H1 (cell line): ENCODE measurements at regions of chr6 and their contacts with region 1.

Region 1: GRCh38 chr6:44475779-44476434 is 88.4 kb downstream of the CDC5L start:
- DNase-seq: peak; percentile 73 to 94
- H3K4me3 ChIP-seq: no peak overlapping the region
- H3K27ac ChIP-seq: peak overlapping the region; percentile 66; the same call in 1 of the 2 replicates
- H3K4me1 ChIP-seq: peaks cover under 1 to 15% (median 11%) of the 10 kb centered on the region in 4 experiments
- H3K27me3 ChIP-seq: no peaks in the 10 kb centered on the region
- CTCF ChIP-seq: peak in 2 of 3 experiments; percentile 92 to 98; a peak in 3 of 4 replicates
- EP300 ChIP-seq: peak in 1 of 2 experiments; percentile 62; a peak in 1 of 3 replicates
- POLR2A ChIP-seq: peak in 1 of 2 experiments; percentile 25; a peak in 2 of 3 replicates
- RAD21 ChIP-seq: peak; percentile 99 to 100

Region 2: DNA sequence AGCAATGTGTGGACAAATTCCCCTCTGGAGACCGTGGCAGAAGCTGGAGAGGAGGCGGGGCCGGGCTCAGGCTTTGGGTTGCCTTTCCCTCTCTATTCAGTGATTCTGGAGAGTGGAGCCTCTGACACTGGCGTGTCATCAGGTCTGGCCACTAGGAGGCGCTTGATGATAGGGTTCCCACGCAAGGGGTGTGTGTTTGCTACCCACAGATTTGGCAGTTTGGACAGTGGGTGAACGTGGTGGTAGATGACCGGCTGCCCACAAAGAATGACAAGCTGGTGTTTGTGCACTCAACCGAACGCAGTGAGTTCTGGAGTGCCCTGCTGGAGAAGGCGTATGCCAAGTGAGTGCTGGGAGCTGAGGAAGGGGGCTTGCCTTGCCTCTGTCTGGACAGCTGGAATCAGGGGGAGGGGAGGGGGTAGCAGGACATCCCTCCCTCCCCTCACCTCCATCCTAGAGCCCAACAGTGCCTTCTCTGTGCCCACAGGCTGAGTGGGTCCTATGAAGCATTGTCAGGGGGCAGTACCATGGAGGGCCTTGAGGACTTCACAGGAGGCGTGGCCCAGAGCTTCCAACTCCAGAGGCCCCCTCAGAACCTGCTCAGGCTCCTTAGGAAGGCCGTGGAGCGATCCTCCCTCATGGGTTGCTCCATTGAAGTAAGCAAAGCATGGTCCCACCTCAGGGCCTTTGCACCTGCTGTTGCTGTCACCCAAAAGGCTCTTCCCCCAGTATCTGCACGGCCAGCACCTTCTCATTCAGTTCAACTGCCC is 303.0 kb before region 1 on chr6:
- CTCF ChIA-PET with region 1: no interaction called
- POLR2A ChIA-PET with region 1: no interaction called
- DNase-seq: peak in 1 of 2 experiments; percentile 91
- H3K4me3 ChIP-seq: no peak overlapping the region
- H3K27ac ChIP-seq: no peak overlapping the region
- H3K4me1 ChIP-seq: peaks cover 0 to 12% (median 3%) of the 10 kb centered on the region in 4 experiments; a peak in 6 of 7 replicates
- H3K27me3 ChIP-seq: no peaks in the 10 kb centered on the region
- CTCF ChIP-seq: peak; percentile 89 to 94 (median 90)
- EP300 ChIP-seq: no peak
- POLR2A ChIP-seq: no peak
- RAD21 ChIP-seq: peak; percentile 93 to 94

Region 3: GRCh38 chr6:44456070-44456965 is 19.6 kb before region 1 on chr6:
- CTCF ChIA-PET with region 1: interaction called, 41 read pairs
- POLR2A ChIA-PET with region 1: no interaction called
- DNase-seq: no peak
- H3K4me3 ChIP-seq: no peak overlapping the region
- H3K27ac ChIP-seq: no peak overlapping the region
- H3K4me1 ChIP-seq: peaks cover 0 to 2% (median under 1%) of the 10 kb centered on the region in 4 experiments; a peak in 2 of 7 replicates
- H3K27me3 ChIP-seq: no peaks in the 10 kb centered on the region
- CTCF ChIP-seq: peak; percentile 72 to 86 (median 85)
- EP300 ChIP-seq: no peak
- POLR2A ChIP-seq: no peak
- RAD21 ChIP-seq: peak; percentile 70 to 79

Region 4: DNA sequence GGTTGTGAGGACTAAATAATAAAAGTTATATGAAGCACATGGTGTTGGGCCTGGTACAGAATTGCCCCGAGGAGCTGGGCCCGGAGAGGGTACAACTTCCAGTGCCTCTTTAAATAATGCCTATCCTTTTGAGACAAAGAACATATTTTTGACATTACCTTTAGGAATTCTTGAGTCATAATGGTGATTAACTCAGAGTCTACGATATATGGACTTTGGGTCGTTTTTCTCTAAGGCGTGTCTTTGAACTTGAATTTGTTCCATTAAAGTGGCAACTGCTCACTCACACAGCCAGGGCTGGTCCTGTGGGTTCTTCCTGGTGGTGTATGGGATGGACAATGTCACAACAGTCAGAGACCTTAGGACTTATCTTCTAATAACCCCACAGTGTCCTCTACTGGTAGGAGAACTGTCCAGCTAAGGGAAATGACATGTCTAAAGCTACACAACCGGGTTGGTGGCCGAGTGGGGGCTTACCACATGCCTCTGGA is 18.1 kb after region 1 on chr6:
- CTCF ChIA-PET with region 1: interaction called, 10 read pairs
- POLR2A ChIA-PET with region 1: no interaction called
- DNase-seq: no peak
- H3K4me3 ChIP-seq: no peak overlapping the region
- H3K27ac ChIP-seq: no peak overlapping the region
- H3K4me1 ChIP-seq: peaks cover 0 to 2% (median 0%) of the 10 kb centered on the region in 4 experiments; a peak in 1 of 7 replicates
- H3K27me3 ChIP-seq: no peaks in the 10 kb centered on the region
- CTCF ChIP-seq: peak in 1 of 3 experiments; percentile 11; a peak in 1 of 4 replicates
- EP300 ChIP-seq: no peak
- POLR2A ChIP-seq: no peak
- RAD21 ChIP-seq: peak in 1 of 2 experiments; percentile 28; a peak in 1 of 4 replicates

Region 5: DNA sequence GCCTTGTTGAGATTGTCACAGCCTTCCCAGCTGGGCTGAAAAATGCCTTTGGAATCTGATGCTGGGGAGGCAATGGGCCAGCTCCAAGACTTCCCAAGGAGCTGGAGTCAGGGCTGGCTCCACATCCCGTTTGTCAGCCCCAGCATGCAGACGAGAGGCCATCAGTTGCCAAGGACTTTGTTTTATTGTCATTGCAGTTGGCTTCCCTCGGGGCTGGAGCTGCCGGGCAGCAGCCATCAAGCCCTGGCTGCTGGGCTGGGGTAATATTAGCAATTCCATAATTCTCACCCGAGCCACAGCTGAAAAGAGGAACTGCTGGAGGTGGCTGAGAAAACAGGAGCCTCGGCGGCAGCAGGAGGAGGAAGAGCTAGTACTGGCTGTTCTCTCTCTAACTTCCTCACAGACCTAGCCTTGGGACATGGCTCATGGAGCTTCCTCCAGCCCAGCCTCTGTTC is 94.1 kb after region 1 on chr6:
- CTCF ChIA-PET with region 1: interaction called, 12 read pairs
- POLR2A ChIA-PET with region 1: no interaction called
- DNase-seq: no peak
- H3K4me3 ChIP-seq: no peak overlapping the region
- H3K27ac ChIP-seq: no peak overlapping the region
- H3K4me1 ChIP-seq: peaks cover 0 to 2% (median 0%) of the 10 kb centered on the region in 4 experiments; a peak in 1 of 7 replicates
- H3K27me3 ChIP-seq: no peaks in the 10 kb centered on the region
- CTCF ChIP-seq: no peak
- EP300 ChIP-seq: no peak
- POLR2A ChIP-seq: no peak
- RAD21 ChIP-seq: no peak

Region 6: GRCh38 chr6:44593539-44593944 is 117.6 kb after region 1 on chr6:
- CTCF ChIA-PET with region 1: interaction called, 37 read pairs
- POLR2A ChIA-PET with region 1: no interaction called
- DNase-seq: peak; percentile 56 to 82
- H3K4me3 ChIP-seq: no peak overlapping the region
- H3K27ac ChIP-seq: no peak overlapping the region
- H3K4me1 ChIP-seq: peaks cover 0 to 3% (median 0%) of the 10 kb centered on the region in 4 experiments; a peak in 2 of 7 replicates
- H3K27me3 ChIP-seq: no peaks in the 10 kb centered on the region
- CTCF ChIP-seq: peak in 2 of 3 experiments; percentile 68 to 69; a peak in 3 of 4 replicates
- EP300 ChIP-seq: peak in 1 of 2 experiments; percentile 21; a peak in 1 of 3 replicates
- POLR2A ChIP-seq: no peak
- RAD21 ChIP-seq: peak; percentile 69 to 81

Region 7: DNA sequence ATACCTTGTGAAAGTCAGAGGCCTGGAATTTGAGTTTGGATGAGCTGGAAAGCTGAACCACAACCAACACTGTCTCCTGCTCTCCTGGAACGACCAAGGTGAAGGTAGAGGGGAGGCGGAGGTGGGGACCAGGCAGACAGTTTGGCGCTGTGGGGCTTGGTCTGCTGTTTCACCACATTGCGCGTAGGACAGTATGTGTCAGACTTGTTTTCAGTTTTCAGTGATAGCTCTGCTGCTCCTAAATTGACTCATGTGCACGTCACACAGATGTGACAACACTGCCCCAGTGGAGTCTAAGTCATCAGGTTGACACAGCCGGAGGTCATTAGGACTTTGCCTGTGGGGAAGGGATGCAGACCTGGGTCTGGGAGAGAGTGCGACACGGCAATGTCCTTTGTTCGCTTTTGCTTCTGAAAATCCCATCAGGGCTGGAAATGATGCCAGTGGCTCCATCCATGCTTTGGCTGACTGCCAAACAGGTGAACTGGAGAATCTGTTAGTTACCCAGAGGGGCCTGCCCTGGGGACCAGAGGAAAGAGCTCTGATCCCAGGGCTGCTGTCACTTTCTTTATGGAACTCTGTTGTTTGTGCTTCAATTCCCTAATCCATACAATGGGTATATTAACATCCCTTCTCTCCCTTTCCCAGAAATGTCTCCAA is 167.1 kb after region 1 on chr6:
- CTCF ChIA-PET with region 1: interaction called, 13 read pairs
- POLR2A ChIA-PET with region 1: no interaction called
- DNase-seq: no peak
- H3K4me3 ChIP-seq: no peak overlapping the region
- H3K27ac ChIP-seq: no peak overlapping the region
- H3K4me1 ChIP-seq: no peaks in the 10 kb centered on the region
- H3K27me3 ChIP-seq: no peaks in the 10 kb centered on the region
- CTCF ChIP-seq: no peak
- EP300 ChIP-seq: no peak
- POLR2A ChIP-seq: no peak
- RAD21 ChIP-seq: no peak